Posterior vena cava (tissue), 2 donors: ENCODE measurements at regions of chr16 and their contacts with region 1.

Region 1: GRCh38 chr16:16150117-16150877 is 73.0 kb downstream of the ABCC6 start:
- DNase-seq: peak; percentile 82

Region 2: GRCh38 chr16:14600164-14600563 is 1550.1 kb before region 1 on chr16:
- intact Hi-C with region 1: no loop called
- DNase-seq: no peak

Region 3: DNA sequence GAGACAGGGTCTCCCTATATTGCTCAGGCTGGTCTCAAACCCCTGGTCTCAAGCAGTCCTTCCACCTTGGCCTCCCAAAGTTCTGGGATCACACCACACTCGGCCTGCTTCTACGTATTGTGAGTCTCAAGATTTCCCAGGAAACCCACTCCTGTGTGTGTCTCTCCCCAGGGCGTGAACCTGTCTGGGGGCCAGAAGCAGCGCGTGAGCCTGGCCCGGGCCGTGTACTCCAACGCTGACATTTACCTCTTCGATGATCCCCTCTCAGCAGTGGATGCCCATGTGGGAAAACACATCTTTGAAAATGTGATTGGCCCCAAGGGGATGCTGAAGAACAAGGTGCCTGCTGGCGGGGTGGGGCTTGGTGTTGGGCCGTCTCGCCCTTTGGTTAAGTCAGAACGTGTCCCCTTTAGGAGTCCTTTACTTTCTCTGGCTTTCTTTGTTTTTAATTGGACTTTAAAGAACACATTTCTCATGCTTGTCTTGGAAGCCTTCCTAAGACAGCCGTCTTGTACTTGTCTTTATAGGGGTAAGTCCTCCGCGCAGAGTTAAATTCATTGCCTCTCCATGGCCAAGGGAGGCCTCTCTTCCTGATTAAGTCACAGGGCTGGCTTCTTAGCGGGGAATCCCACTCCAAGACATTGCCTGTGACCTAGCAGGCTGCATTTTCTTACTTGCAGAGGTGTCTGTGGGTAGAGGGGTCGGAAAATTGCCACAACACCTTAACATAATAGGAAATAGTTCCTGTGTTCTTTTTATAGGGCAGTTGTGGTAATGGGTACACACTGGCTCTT is 63.4 kb before region 1 on chr16:
- intact Hi-C with region 1: loop called in 1 of 2 experiments (anchors 2 kb)
- DNase-seq: no peak

Region 4: DNA sequence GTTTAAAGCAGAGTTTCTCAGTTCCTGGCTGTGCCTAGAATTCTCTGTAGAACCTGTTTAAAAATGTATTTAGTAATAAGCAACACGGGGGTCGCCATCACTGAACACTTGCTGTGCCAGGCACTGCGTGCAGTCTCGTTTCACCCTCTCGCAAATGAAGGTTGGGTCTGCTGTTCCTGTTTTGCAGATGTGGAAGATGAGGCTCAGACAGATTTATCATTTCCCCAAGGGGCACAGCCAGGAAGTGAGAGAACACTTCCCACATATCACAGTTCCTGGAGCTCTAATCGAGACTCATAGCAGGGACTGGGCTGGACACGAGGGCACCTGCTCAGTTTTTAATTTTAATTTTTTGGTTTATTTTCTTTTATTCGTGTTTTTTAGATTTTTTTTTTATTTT is 49.7 kb before region 1 on chr16:
- intact Hi-C with region 1: no loop called
- DNase-seq: no peak

Region 5: DNA sequence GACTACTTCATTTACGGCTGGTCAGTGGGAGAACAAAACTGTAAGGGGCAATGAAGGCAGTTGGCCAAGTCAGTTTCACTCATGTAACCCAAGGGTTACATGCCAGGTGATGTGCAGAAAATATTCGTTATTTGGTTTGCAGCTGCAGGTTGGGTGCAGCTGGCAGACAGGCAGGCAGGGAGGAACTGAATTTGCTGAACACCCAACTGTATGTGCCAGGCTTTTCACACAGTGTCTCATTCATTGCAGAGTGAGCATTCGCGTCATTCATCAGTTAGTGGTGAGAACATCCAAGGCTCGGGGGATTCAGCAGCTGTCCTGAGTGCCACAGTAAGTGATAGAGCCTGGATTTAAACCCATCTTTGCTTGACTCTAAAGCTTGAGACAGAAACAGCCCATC is 13.3 kb after region 1 on chr16:
- intact Hi-C with region 1: no loop called
- DNase-seq: no peak